Breast epithelium (tissue), 4 donors: ENCODE measurements at regions of chrX and their contacts with region 1.

Region 1: DNA sequence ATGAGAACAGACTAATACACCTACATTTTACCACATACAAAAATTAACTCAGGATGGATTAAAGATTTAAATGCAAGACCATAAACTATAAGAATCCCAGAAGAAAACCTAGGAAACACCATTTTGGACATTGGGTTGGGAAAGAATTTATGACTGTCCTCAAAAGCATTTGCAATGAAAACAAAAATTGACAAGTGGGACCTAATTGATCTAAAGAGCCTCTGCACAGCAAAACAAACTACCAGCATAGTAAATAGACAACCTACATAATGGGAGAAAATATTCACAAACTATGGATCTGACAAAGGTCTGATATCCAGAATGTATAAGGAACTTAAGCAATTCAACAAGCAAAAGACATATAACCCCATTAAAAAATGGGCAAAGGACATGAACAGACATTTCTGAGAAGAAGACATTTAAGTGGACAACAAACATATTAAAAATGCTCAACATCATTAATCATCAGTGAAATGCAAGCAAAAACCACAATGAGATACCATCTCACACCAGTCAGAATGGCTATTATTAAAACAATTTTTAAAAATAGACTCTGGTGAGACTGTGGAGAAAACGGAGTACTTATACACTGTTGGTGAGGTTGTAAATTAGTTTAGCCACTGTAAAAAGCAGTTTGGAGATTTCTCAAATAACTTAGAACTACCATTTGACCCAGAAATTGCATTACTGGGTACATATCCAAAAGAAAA is 221.7 kb upstream of the DIPK2B start:
- DNase-seq: no peak
- H3K4me3 ChIP-seq: no peak overlapping the region
- H3K27ac ChIP-seq: no peak overlapping the region
- H3K4me1 ChIP-seq: no peaks in the 10 kb centered on the region
- H3K27me3 ChIP-seq: peaks cover 0 to 32% of the 10 kb centered on the region in 2 donors
- CTCF ChIP-seq: no peak
- POLR2A ChIP-seq: no peak

Region 2: GRCh38 chrX:45660477-45660876 is 238.1 kb after region 1 on chrX:
- intact Hi-C with region 1: loop called (anchors 5 kb)
- DNase-seq: no peak
- H3K4me3 ChIP-seq: no peak overlapping the region
- H3K27ac ChIP-seq: no peak overlapping the region
- H3K4me1 ChIP-seq: no peaks in the 10 kb centered on the region
- H3K27me3 ChIP-seq: peaks cover 0 to 10% of the 10 kb centered on the region in 2 donors
- CTCF ChIP-seq: no peak
- POLR2A ChIP-seq: no peak